ENCODE measurements at regions of chr9 and their contacts with region 1.

Region 1: DNA sequence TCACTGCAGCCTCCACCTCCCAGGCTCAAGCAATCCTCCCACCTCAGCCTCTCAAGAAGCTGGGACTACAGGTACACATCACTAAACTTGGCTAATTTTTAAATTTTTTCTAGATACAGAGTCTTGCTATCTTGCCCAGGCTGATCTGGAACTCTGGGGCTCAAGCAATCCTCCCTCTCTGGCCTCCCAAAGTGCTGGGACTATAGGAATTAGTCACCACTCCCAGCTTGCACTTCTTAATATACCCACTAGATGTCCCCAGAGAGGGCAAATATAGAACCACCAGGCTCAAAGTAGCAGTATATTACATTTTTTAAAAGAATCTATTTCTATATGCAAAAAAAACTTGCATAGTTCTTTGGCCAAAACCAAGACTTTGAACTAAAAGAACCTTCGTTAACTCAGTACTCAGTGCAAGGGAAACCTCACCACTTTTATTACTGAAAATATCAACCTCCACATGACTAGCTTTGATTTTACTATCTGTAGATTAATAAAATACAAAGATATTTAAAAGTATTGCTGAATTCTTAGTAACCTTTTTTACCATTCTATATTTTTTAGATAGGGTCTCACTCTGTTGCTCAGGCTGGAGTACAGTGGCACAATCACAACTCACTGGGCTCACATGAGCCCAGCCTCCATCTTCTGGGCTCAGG is 25.8 kb upstream of the HSD17B3 start:
- DNase-seq: peak; percentile 45 to 60 (median 54)
- ATAC-seq: peak; percentile 65
- H3K4me3 ChIP-seq: no peak overlapping the region
- H3K27ac ChIP-seq: no peak overlapping the region
- H3K4me1 ChIP-seq: no peaks in the 10 kb centered on the region
- H3K27me3 ChIP-seq: no peaks in the 10 kb centered on the region
- CTCF ChIP-seq: peak; percentile 62 to 90 (median 84)
- POLR2A ChIP-seq: no peak

Region 2: GRCh38 chr9:96661711-96662110 is 333.9 kb after region 1 on chr9:
- intact Hi-C with region 1: loop called (anchors 10 kb)
- DNase-seq: no peak
- ATAC-seq: no peak
- H3K4me3 ChIP-seq: no peak overlapping the region
- H3K27ac ChIP-seq: no peak overlapping the region
- H3K4me1 ChIP-seq: no peaks in the 10 kb centered on the region
- H3K27me3 ChIP-seq: no peaks in the 10 kb centered on the region
- CTCF ChIP-seq: no peak
- POLR2A ChIP-seq: no peak

Measured in body of pancreas (tissue), 4 donors.